Panc1 (cell line): ENCODE measurements at regions of chr17 and their contacts with region 1.

Region 1: DNA sequence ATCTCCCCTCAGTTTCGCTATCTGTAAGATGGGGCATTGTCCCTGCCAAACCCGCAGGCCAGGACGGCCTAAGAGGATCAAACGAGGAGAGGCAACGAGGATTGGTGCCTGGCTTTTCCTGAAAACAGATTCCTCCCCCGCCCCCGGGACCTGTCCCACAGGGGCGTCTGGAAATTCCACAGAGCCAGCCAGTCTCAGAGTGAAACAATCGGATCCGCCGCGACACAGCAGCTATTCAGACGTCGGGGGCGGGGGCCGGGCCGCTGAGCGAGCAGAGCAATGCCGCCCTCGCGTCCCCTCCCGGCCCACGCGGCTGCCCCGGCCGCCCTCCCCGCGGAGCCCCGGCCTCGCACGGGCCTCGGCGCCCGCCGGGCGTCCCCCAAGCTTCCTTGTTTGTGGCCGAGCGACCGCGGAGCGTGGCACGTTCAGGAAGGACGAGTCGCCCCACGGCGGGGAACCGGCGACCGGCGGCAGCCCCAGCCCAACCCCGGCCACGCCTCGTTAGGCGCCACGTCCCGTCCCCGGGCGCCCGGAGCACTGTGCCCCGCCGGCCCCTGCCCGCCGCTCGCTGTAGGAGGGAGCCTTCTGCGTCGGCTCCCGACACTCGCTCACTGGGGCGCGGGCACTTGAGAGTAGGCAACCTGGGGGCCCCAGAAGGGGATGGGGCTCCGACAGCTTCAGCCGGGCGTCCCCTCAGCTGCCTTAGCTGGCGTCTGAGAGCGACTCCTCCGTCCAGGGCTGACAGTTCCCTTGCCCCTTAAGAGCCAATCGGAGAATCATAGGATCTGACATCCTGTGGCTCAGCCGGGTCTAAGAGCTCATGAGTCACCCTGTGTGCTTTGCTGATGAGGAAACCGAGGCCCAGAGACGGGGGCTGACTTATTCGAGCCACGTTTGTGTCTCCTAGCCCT is 29.7 kb upstream of the PHOSPHO1 start:
- DNase-seq: peak; percentile 42
- ATAC-seq: peak; percentile 91
- H3K4me3 ChIP-seq: peak overlapping the region; percentile 50 to 76
- H3K27ac ChIP-seq: peak overlapping the region; percentile 29
- H3K4me1 ChIP-seq: no peaks in the 10 kb centered on the region
- H3K27me3 ChIP-seq: no peaks in the 10 kb centered on the region
- CTCF ChIP-seq: no peak

Region 2: GRCh38 chr17:49239963-49240362 is 20.3 kb before region 1 on chr17:
- CTCF ChIA-PET with region 1: no interaction called
- POLR2A ChIA-PET with region 1: interaction called, 12 read pairs
- in situ Hi-C with region 1: no loop called
- intact Hi-C with region 1: no loop called
- DNase-seq: no peak
- ATAC-seq: no peak
- H3K4me3 ChIP-seq: no peak overlapping the region
- H3K27ac ChIP-seq: no peak overlapping the region
- H3K4me1 ChIP-seq: no peaks in the 10 kb centered on the region
- H3K27me3 ChIP-seq: no peaks in the 10 kb centered on the region
- CTCF ChIP-seq: no peak

Region 3: DNA sequence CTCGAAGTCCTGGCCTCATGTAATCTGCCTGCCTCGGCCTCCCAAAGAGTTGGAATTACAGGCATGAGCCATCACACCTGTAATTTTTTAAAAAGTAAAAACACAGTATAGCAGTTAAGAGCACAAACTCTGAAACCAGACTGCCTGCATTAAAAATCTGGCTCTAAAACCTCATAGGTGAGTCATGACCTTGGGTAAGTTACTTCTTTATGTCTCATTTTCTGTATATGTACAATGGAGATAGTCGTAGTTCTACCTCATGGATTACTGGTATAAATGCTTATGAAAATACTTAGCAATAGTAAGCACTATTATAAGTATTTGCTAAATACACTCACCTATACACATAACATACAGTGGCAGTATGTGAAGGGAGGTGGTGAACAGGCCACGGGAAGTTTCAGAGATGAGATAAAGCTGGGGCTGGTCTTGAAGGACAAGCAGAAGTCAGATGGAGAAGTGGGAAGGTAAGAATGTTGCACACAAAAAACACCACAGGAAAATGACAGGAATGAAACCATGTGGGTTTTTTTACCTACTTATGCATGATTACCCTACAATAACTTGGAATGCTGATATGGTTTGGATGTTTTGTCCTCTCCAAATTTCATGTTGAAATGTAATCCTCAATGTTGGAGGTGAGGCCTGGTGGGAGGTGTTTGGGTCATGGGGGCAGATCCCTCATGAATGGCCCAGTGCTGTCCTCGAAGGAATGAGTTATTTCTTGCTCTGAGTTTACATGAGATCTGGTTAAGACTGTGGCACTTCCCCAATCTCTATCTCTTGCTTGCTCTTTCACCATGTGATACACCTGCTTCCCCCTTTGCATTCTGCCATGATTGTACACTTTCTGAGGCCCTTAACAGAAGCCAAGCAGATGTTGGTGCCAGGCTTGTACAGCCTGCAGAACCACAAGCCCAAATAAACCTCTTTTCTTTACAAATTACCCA is 67.8 kb after region 1 on chr17:
- CTCF ChIA-PET with region 1: no interaction called
- POLR2A ChIA-PET with region 1: interaction called, 11 read pairs
- in situ Hi-C with region 1: no loop called
- intact Hi-C with region 1: no loop called
- DNase-seq: no peak
- ATAC-seq: no peak
- H3K4me3 ChIP-seq: no peak overlapping the region
- H3K27ac ChIP-seq: no peak overlapping the region
- H3K4me1 ChIP-seq: no peaks in the 10 kb centered on the region
- H3K27me3 ChIP-seq: no peaks in the 10 kb centered on the region
- CTCF ChIP-seq: no peak